ENCODE measurements at regions of chr11 and their contacts with region 1.

Region 1: GRCh38 chr11:72430741-72431570 is 3.4 kb downstream of the CLPB start:
- DNase-seq: peak; percentile 72
- H3K4me3 ChIP-seq: no peak overlapping the region
- H3K27ac ChIP-seq: no peak overlapping the region
- H3K4me1 ChIP-seq: peaks cover 4% of the 10 kb centered on the region
- H3K27me3 ChIP-seq: no peaks in the 10 kb centered on the region
- CTCF ChIP-seq: peak; percentile 85

Region 2: GRCh38 chr11:71787098-71787823 is 643.7 kb before region 1 on chr11:
- CTCF ChIA-PET with region 1: no interaction called
- POLR2A ChIA-PET with region 1: interaction called, 10 read pairs
- intact Hi-C with region 1: loop called (anchors 10 kb)
- DNase-seq: peak; percentile 99
- H3K4me3 ChIP-seq: peak overlapping the region; percentile 78
- H3K27ac ChIP-seq: peak overlapping the region; percentile 88
- H3K4me1 ChIP-seq: no peaks in the 10 kb centered on the region
- H3K27me3 ChIP-seq: no peaks in the 10 kb centered on the region
- CTCF ChIP-seq: no peak

Region 3: GRCh38 chr11:71977743-71978418 is 453.1 kb before region 1 on chr11:
- CTCF ChIA-PET with region 1: no interaction called
- POLR2A ChIA-PET with region 1: no interaction called
- intact Hi-C with region 1: loop called (anchors 2 kb)
- DNase-seq: peak; percentile 74
- H3K4me3 ChIP-seq: no peak overlapping the region
- H3K27ac ChIP-seq: no peak overlapping the region
- H3K4me1 ChIP-seq: no peaks in the 10 kb centered on the region
- H3K27me3 ChIP-seq: no peaks in the 10 kb centered on the region
- CTCF ChIP-seq: peak; percentile 90

Region 4: GRCh38 chr11:72030472-72031045 is 400.4 kb before region 1 on chr11:
- CTCF ChIA-PET with region 1: interaction called, 31 read pairs
- POLR2A ChIA-PET with region 1: no interaction called
- intact Hi-C with region 1: loop called (anchors 5 kb)
- DNase-seq: no peak
- H3K4me3 ChIP-seq: no peak overlapping the region
- H3K27ac ChIP-seq: no peak overlapping the region
- H3K4me1 ChIP-seq: peaks cover 15% of the 10 kb centered on the region
- H3K27me3 ChIP-seq: no peaks in the 10 kb centered on the region
- CTCF ChIP-seq: no peak

Region 5: GRCh38 chr11:72238040-72238450 is 192.9 kb before region 1 on chr11:
- CTCF ChIA-PET with region 1: interaction called, 5 read pairs
- POLR2A ChIA-PET with region 1: interaction called, 4 read pairs
- intact Hi-C with region 1: loop called (anchors 5 kb)
- DNase-seq: peak; percentile 80
- H3K4me3 ChIP-seq: no peak overlapping the region
- H3K27ac ChIP-seq: no peak overlapping the region
- H3K4me1 ChIP-seq: no peaks in the 10 kb centered on the region
- H3K27me3 ChIP-seq: peaks cover 40% of the 10 kb centered on the region
- CTCF ChIP-seq: peak; percentile 94

Region 6: DNA sequence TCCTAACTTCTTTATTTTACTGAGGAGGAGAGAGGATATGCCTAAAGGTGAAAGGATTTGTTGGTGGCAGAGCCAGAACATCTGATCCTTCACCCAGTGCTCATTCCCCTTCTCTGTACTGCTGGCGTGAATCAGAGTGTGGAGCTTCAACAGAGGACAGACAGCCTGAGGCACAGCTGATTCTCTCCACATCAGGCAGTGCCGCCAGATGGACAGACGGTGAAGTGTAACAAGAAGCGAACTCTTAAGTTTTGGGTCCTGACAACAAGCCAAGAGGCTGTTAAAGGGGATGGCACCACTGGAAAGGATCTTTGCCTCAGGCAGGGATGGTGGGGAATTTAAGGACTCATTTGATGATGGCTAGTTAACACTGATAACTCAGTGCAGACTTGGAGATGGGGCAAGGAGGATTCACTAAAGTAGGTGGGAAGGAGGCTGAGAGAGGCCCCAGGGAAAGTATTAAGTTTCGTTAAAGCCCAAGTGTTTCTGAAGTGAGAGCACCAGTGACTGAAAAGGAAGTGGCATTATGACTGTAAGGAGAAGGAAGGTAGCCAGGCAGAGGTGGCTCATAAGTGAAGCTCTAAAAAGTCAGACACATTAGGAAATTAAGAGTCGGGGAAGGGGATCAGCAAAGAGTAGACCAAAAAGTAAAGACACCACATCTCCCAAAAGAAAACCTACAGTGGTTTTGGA is 78.0 kb before region 1 on chr11:
- CTCF ChIA-PET with region 1: interaction called, 13 read pairs
- POLR2A ChIA-PET with region 1: no interaction called
- intact Hi-C with region 1: loop called (anchors 5 kb)
- DNase-seq: peak; percentile 57
- H3K4me3 ChIP-seq: no peak overlapping the region
- H3K27ac ChIP-seq: no peak overlapping the region
- H3K4me1 ChIP-seq: peaks cover 5% of the 10 kb centered on the region
- H3K27me3 ChIP-seq: no peaks in the 10 kb centered on the region
- CTCF ChIP-seq: peak; percentile 36; the same call in 1 of the 2 replicates